CD8-positive, alpha-beta T cell (primary cell): ENCODE measurements at regions of chr11 and their contacts with region 1.

Region 1: GRCh38 chr11:33700425-33701271 is at the start of gene C11orf91:
- DNase-seq: peak; percentile 88 to 96 (median 94)
- ATAC-seq: peak; percentile 95
- H3K4me3 ChIP-seq: peak within 1 kb of the TSS; percentile 51 to 68
- H3K4me3 Mint-ChIP-seq: peak within 1 kb of the TSS; percentile 92
- H3K27ac ChIP-seq: no peak within 1 kb of the TSS
- H3K27ac Mint-ChIP-seq: peak within 1 kb of the TSS; percentile 64
- H3K4me1 ChIP-seq: peaks cover 13% of the 10 kb centered on the region
- H3K4me1 Mint-ChIP-seq: peaks cover 25% of the 10 kb centered on the region
- H3K27me3 ChIP-seq: no peaks in the 10 kb centered on the region
- H3K27me3 Mint-ChIP-seq: peaks cover 2% of the 10 kb centered on the region
- CTCF ChIP-seq: no peak
- total RNA-seq, gene C11orf91: 0.54 TPM in 1 of 2 experiments, not detected in the other

Region 2: GRCh38 chr11:32583459-32584271 is 1117.0 kb before region 1 on chr11 and contains the start of gene EIF3M:
- CTCF ChIA-PET with region 1: no interaction called
- POLR2A ChIA-PET with region 1: no interaction called
- intact Hi-C with region 1: loop called (anchors 2 to 5 kb)
- DNase-seq: peak; percentile 91 to 98 (median 95)
- ATAC-seq: peak; percentile 98
- H3K4me3 ChIP-seq: peak within 1 kb of the TSS; percentile 80 to 93
- H3K4me3 Mint-ChIP-seq: peak within 1 kb of the TSS; percentile 99
- H3K27ac ChIP-seq: peak within 1 kb of the TSS; percentile 81 to 86
- H3K27ac Mint-ChIP-seq: peak within 1 kb of the TSS; percentile 99
- H3K4me1 ChIP-seq: peaks cover 29% of the 10 kb centered on the region
- H3K4me1 Mint-ChIP-seq: peaks cover 39% of the 10 kb centered on the region
- H3K27me3 ChIP-seq: no peaks in the 10 kb centered on the region
- H3K27me3 Mint-ChIP-seq: no peaks in the 10 kb centered on the region
- CTCF ChIP-seq: no peak
- total RNA-seq, gene EIF3M: 269 to 274 TPM

Region 3: DNA sequence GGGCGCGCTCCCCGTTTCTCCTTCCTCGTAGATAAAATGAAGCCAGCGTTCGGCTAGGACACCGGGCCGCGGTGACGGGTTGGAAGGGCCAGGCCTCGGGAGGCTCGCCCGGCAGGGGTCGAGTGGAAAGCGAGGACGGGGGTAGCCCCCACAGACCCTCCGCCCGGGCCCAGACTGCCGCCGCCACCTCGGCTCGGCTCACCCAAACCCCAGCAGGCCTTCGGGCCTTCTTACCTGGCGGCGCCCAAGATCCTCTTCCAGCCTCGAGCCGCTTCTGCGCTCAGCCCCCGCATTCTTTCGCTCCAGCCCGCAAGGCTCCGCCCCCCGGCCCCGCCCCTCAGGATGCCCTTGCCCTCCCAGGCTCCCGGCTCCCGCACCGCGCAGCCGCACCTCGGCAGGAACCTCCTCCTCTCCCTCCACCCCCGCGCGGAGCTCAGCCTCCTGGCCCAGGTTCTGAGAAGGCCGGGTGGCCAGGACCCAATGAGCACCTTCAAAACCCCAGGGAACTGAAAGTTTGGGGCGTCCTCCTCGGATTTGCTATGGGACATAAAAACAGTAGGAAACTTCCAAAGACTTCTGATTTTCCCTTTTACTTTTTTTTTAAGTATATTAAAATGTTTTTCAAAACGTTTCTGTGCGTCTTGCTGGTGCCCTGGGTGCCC is 35.6 kb after region 1 on chr11 and contains the start of gene CD59:
- CTCF ChIA-PET with region 1: no interaction called
- POLR2A ChIA-PET with region 1: interaction called, 3 read pairs
- intact Hi-C with region 1: loop called (anchors 1 to 2 kb)
- DNase-seq: peak; percentile 70 to 92 (median 90)
- ATAC-seq: peak; percentile 86
- H3K4me3 ChIP-seq: peak within 1 kb of the TSS; percentile 82 to 93
- H3K4me3 Mint-ChIP-seq: peak within 1 kb of the TSS; percentile 91
- H3K27ac ChIP-seq: peak within 1 kb of the TSS; percentile 54 to 72
- H3K27ac Mint-ChIP-seq: peak within 1 kb of the TSS; percentile 78
- H3K4me1 ChIP-seq: peaks cover 11% of the 10 kb centered on the region
- H3K4me1 Mint-ChIP-seq: peaks cover 31% of the 10 kb centered on the region
- H3K27me3 ChIP-seq: no peaks in the 10 kb centered on the region
- H3K27me3 Mint-ChIP-seq: no peaks in the 10 kb centered on the region
- CTCF ChIP-seq: no peak
- total RNA-seq, gene CD59: 31.0 to 34.5 TPM

Region 4: GRCh38 chr11:34028425-34028824 is 327.8 kb after region 1 on chr11:
- CTCF ChIA-PET with region 1: no interaction called
- POLR2A ChIA-PET with region 1: no interaction called
- intact Hi-C with region 1: no loop called
- DNase-seq: no peak
- ATAC-seq: no peak
- H3K4me3 ChIP-seq: no peak overlapping the region
- H3K4me3 Mint-ChIP-seq: no peak overlapping the region
- H3K27ac ChIP-seq: no peak overlapping the region
- H3K27ac Mint-ChIP-seq: no peak overlapping the region
- H3K4me1 ChIP-seq: no peaks in the 10 kb centered on the region
- H3K4me1 Mint-ChIP-seq: no peaks in the 10 kb centered on the region
- H3K27me3 ChIP-seq: no peaks in the 10 kb centered on the region
- H3K27me3 Mint-ChIP-seq: peaks cover 4% of the 10 kb centered on the region
- CTCF ChIP-seq: no peak

Region 5: DNA sequence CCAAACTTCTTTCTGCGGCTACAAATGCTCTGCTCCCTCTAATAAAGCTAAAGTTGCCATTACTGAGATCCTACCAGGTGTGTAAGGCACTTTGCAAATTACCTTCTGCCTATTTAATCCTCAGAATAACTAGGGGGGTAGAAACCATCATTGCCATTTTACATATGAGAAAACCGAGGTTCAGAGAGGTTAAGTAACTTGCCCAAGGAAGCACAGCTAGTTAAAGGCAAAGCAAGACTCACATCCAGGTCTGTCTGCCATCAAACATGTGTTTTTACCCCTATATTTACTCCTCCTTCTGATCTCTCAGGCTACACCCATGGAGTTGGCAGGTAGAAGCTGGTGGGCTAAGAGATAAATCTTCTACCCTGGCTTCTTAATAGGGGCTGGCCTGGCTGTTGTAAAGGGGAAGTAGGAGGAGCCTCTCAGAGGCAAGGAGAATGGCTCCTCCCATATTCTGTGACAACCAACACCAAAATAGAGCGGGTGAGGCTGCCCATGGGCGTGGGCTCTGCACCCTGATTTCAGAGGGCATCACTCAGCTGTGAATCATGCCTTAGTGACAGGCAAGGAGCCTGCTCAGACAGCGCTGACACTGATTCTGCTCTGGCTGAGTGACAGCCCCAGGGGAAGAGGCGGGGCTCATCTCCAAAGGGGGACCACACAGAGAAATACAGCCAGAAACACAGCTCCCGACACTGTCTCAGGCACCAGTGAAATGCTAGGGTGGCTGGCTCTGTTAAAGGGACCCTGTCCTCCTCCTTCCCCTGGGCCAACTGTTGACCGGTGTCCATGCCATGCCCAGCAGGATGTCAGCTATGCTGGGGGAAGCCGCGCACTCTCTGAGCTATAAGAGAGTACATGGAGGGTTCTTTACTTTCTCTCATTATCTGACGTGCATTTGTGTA is 550.3 kb after region 1 on chr11:
- CTCF ChIA-PET with region 1: no interaction called
- POLR2A ChIA-PET with region 1: no interaction called
- intact Hi-C with region 1: loop called in 1 of 2 experiments (anchors 5 kb)
- DNase-seq: peak; percentile 33 to 90 (median 79)
- ATAC-seq: peak; percentile 94
- H3K4me3 ChIP-seq: peak overlapping the region; percentile 1 to 47
- H3K4me3 Mint-ChIP-seq: peak overlapping the region; percentile 66
- H3K27ac ChIP-seq: no peak overlapping the region
- H3K27ac Mint-ChIP-seq: peak overlapping the region; percentile 84
- H3K4me1 ChIP-seq: peaks cover 51% of the 10 kb centered on the region
- H3K4me1 Mint-ChIP-seq: peaks cover 54% of the 10 kb centered on the region
- H3K27me3 ChIP-seq: no peaks in the 10 kb centered on the region
- H3K27me3 Mint-ChIP-seq: peaks cover 3% of the 10 kb centered on the region
- CTCF ChIP-seq: no peak

Region 6: GRCh38 chr11:35662649-35663407 is 1962.2 kb after region 1 on chr11 and contains the start of gene TRIM44:
- CTCF ChIA-PET with region 1: no interaction called
- POLR2A ChIA-PET with region 1: no interaction called
- intact Hi-C with region 1: loop called (anchors 5 to 10 kb)
- DNase-seq: peak; percentile 57 to 89 (median 79)
- ATAC-seq: peak; percentile 81
- H3K4me3 ChIP-seq: peak within 1 kb of the TSS; percentile 91 to 97
- H3K4me3 Mint-ChIP-seq: peak within 1 kb of the TSS; percentile 96
- H3K27ac ChIP-seq: peak within 1 kb of the TSS; percentile 84 to 85
- H3K27ac Mint-ChIP-seq: peak within 1 kb of the TSS; percentile 97
- H3K4me1 ChIP-seq: peaks cover 23% of the 10 kb centered on the region
- H3K4me1 Mint-ChIP-seq: peaks cover 47% of the 10 kb centered on the region
- H3K27me3 ChIP-seq: peaks cover 0 to 4% of the 10 kb centered on the region in 2 experiments
- H3K27me3 Mint-ChIP-seq: no peaks in the 10 kb centered on the region
- CTCF ChIP-seq: no peak
- total RNA-seq, gene TRIM44: 25.7 to 29.5 TPM